Activated B cell treated with CpG ODN at 0.5 μM for 24 hours (primary cell): ENCODE measurements at regions of chr10 and their contacts with region 1.

Region 1: DNA sequence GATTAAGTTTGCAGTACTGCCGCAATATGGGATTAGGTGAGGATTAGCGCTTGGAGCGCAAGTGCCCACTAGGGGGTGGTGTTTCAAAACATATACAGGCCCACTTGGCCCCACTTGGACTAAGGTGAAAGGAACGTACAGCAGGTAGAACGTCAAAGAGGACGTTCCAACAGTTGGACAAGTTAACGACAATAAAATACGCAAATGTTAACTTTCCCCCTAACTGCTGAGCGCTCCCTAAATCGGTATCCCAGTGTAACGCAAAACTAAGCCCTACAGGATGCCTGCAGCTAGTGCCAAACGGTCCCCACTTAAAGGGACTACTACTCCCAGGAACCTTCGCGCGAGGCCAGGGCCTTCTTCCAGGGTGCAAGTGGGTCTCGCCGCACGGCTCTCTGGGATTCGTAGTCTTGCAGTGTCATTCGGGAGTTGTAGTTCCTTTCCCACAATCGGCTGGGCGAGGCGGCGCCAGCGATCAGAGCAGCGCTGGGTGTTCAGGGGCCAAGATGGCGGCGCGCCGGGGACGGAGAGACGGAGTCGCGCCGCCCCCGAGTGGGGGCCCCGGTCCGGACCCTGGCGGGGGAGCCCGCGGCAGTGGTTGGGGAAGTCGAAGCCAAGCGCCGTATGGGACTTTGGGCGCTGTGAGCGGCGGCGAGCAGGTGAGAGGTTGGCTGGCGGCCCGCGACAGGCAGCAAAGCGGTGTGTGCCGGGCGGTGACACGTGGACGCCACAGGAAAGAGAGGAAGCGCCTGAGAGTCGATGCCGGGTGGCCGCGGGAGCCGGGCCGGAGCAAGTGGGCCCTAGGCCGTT is at the start of gene PPRC1:
- DNase-seq: peak; percentile 89
- ATAC-seq: peak; percentile 93
- H3K4me3 Mint-ChIP-seq: peak within 1 kb of the TSS; percentile 99
- H3K27ac Mint-ChIP-seq: peak within 1 kb of the TSS; percentile 98
- H3K4me1 Mint-ChIP-seq: peaks cover 41% of the 10 kb centered on the region
- H3K27me3 Mint-ChIP-seq: no peaks in the 10 kb centered on the region
- CTCF ChIP-seq: peak; percentile 81
- total RNA-seq, gene PPRC1: 65.1 and 77.2 TPM in 2 replicates

Region 2: DNA sequence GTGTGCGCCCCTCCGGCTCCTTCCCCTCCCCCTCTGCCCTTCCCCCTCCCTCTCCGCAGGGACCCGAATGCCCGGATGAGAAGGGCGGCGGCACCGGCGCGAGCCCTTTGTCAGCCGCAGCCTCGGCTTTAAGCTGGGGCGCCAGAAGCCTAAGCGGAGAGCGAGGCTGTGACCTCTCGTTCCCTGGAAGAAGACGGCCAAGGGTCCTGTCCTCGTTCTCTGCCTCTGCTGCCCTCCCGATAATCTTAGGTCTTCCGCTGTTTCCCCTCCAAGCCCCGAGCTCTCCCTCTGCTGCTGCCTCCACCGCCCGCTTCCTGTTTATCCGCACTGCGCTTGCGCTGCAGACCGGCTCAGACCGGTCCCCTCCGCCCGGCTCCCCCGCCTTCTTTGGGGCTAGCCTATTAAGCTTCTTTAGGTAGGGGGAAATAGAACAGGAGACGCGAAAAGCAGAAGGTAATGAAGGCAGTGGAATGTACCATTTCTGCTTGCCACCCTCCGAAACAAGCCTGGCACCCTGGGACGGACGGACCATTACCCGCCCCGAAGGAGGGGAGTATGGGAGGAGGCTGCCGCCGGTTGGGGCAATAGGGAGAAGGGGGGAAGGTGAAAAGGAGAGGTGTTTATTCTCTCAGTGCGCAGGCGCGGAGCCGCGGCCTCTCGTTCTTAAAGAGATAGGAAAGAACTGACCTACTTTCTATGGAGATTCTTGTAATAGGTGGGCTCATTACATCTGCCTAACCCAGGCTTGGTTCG is 314.5 kb before region 1 on chr10 and contains the start of gene OGA:
- CTCF ChIA-PET with region 1: no interaction called
- POLR2A ChIA-PET with region 1: no interaction called
- intact Hi-C with region 1: loop called (anchors 1 kb)
- DNase-seq: peak; percentile 91
- ATAC-seq: peak; percentile 86
- H3K4me3 Mint-ChIP-seq: peak within 1 kb of the TSS; percentile 98
- H3K27ac Mint-ChIP-seq: peak within 1 kb of the TSS; percentile 99
- H3K4me1 Mint-ChIP-seq: peaks cover 42% of the 10 kb centered on the region
- H3K27me3 Mint-ChIP-seq: no peaks in the 10 kb centered on the region
- CTCF ChIP-seq: no peak
- total RNA-seq, gene OGA: 209 and 271 TPM in 2 replicates

Region 3: DNA sequence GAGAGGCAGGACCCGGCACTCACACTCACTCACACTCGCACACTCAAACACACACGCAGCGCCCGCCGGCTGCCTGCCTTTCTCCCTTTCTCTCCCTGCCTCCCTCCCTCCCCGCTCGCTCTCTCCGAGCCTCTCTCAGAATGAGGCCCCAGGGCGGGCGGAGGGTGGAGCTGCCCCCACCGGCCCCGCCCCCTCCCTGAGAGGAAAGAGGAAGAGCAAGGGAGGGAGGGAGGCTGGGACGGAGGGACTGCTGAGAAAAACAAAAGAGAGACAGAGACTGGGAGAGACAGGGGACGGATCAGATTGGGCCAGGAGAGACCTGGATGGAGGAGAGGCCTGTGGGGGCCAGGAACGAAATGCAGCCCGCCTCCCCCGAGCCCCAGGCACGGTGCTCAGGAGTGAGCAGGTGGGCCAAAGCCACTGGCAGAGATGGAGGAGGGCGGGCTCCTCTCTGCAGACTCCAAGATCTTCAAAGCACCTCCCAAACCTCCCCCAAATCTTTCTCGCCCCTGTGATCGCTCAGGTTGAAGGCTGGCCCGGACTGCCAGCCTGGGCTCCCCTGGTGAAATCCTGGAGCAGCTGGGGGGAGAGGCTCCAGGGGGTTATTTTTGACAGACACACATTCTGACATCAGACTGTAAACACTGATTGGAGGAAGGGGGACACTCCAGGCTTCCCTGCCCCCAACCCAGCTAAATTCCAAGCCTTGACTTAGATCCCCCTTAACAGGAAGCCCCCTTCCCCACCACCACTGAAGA is 17.7 kb before region 1 on chr10:
- CTCF ChIA-PET with region 1: interaction called, 13 read pairs
- POLR2A ChIA-PET with region 1: interaction called, 18 read pairs
- intact Hi-C with region 1: loop called (anchors 1 kb)
- DNase-seq: peak; percentile 70
- ATAC-seq: peak; percentile 78
- H3K4me3 Mint-ChIP-seq: peak overlapping the region; percentile 91
- H3K27ac Mint-ChIP-seq: peak overlapping the region; percentile 94
- H3K4me1 Mint-ChIP-seq: peaks cover 62% of the 10 kb centered on the region
- H3K27me3 Mint-ChIP-seq: no peaks in the 10 kb centered on the region
- CTCF ChIP-seq: no peak

Region 4: GRCh38 chr10:102151774-102152544 is 19.2 kb after region 1 on chr10 and contains the start of gene NOLC1:
- CTCF ChIA-PET with region 1: interaction called, 5 read pairs
- POLR2A ChIA-PET with region 1: interaction called, 9 read pairs
- intact Hi-C with region 1: loop called (anchors 1 kb)
- DNase-seq: peak; percentile 99
- ATAC-seq: peak; percentile 96
- H3K4me3 Mint-ChIP-seq: peak within 1 kb of the TSS; percentile 97
- H3K27ac Mint-ChIP-seq: peak within 1 kb of the TSS; percentile 93
- H3K4me1 Mint-ChIP-seq: peaks cover 35% of the 10 kb centered on the region
- H3K27me3 Mint-ChIP-seq: no peaks in the 10 kb centered on the region
- CTCF ChIP-seq: no peak
- total RNA-seq, gene NOLC1: 95.1 and 106 TPM in 2 replicates

Region 5: GRCh38 chr10:102225646-102226541 is 93.1 kb after region 1 on chr10 and contains the start of gene ELOVL3:
- CTCF ChIA-PET with region 1: no interaction called
- POLR2A ChIA-PET with region 1: no interaction called
- intact Hi-C with region 1: loop called (anchors 1 kb)
- DNase-seq: peak; percentile 69
- ATAC-seq: peak; percentile 94
- H3K4me3 Mint-ChIP-seq: peak within 1 kb of the TSS; percentile 71
- H3K27ac Mint-ChIP-seq: no peak within 1 kb of the TSS
- H3K4me1 Mint-ChIP-seq: peaks cover 19% of the 10 kb centered on the region
- H3K27me3 Mint-ChIP-seq: peaks cover 59% of the 10 kb centered on the region
- CTCF ChIP-seq: no peak
- total RNA-seq, gene ELOVL3: not detected in 2 replicates

Region 6: DNA sequence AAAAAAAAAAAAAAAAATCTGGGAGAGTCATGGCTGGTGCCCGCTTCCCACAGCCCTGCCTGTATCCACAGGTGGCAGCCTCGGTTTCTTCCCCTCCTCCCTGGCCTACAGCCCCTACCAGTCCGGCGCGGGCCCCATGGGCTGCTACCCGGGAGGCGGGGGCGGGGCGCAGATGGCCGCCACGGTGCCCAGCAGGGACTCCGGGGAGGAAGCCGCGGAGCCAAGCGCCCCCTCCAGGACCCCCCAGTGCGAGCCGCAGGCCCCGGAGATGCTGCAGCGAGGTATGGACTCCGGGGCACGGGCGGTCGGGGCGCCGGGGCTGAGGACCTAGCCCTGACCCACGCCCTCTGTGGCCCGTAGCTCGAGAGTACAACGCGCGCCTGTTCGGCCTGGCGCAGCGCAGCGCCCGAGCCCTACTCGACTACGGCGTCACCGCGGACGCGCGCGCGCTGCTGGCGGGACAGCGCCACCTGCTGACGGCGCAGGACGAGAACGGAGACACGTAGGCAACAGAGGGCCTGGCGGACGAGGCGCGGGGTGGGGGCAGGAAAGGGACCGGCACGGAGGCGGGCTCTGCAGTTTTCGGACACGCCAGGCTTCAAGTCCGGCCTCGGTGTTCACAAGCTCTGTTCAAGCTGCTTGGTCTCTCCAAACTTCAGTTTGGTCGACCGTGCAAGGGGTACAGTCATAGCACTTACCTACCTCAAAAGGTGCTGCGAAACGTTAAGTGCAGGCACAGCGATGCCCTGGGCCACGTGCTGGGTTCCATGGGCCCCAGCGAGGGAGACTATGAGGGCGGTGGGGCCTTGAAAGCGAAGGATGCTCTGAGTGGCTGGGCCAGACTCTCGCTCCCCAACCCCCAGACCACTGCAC is 266.7 kb after region 1 on chr10:
- CTCF ChIA-PET with region 1: no interaction called
- POLR2A ChIA-PET with region 1: interaction called, 3 read pairs
- intact Hi-C with region 1: loop called (anchors 1 kb)
- DNase-seq: peak; percentile 87
- ATAC-seq: peak; percentile 37
- H3K4me3 Mint-ChIP-seq: peak overlapping the region; percentile 94
- H3K27ac Mint-ChIP-seq: peak overlapping the region; percentile 97
- H3K4me1 Mint-ChIP-seq: peaks cover 54% of the 10 kb centered on the region
- H3K27me3 Mint-ChIP-seq: no peaks in the 10 kb centered on the region
- CTCF ChIP-seq: peak; percentile 95